ENCODE measurements at regions of chr12 and their contacts with region 1.

Region 1: DNA sequence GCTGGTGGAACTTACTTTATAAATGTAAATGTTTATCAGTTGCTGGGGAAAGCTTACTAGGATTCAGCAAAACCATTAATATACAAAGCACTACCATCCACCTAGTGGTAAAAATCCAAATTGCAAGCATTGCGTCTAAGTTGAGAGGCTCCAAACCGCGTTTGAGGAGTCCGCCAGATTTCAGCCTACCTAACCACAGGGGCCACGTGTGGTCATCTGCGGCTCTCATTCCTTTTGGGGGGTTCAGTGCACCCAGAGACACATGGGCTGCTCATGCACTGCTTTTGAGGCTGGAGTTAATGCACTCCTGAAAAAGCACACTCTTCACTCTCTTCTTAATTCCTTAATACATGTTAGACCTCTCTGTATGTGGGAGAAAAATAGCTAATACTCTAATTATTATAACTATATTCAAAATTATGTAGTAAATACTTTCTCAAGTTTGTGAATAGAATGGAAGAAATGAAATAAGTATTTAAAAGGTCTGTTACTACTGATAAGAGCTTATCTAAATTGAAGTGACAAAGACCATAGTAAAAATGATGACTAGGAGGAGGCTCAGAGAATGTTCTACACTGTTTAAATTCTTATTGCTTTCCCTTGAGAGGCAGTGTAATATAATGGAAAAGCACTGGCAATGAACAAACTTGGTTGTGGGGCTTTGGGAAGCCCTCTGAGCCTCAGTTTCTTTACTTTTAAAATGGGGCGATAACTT is 41.4 kb upstream of the MANSC4 start:
- DNase-seq: peak in 2 of 5 donors; percentile 21 to 28
- H3K4me3 ChIP-seq: no peak overlapping the region
- H3K27ac ChIP-seq: no peak overlapping the region
- H3K4me1 ChIP-seq: peaks cover 2% of the 10 kb centered on the region
- H3K27me3 ChIP-seq: no peaks in the 10 kb centered on the region
- CTCF ChIP-seq: peak; percentile 10 to 48 (median 45)
- EP300 ChIP-seq: no peak
- POLR2A ChIP-seq: no peak

Region 2: DNA sequence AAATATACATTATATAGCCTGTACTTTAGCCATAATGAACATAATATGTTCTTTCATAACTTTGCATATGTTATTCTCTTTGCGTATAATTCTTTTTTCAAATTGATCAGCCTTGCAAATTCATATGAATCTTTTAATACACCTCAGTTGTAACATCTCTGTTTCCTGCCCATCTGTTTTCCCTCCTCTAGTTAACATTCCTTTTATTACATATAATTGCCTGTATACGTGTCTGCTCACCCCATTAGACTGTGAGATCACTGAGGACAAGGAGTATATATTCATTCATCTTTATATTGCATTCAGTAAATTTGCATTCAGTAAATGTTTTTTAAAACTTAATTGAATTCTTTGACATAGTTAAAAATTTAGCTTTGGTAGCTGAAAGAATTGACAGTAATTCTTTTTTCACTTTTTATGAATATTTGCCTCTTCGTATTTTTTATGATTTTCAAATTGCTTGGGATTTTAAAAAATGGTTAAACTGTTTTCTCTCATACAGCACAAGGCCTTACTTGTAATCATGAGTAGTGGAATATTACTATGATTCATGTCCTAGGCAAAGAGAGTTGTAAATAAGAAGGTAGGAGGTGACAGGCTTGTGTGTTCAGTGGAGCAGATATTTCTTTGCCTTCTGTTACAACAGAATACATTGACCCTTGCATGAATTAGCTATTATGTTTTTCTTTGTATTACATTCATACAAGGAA is 74.2 kb before region 1 on chr12:
- intact Hi-C with region 1: loop called in 1 of 4 experiments (anchors 10 kb)
- DNase-seq: no peak
- H3K4me3 ChIP-seq: no peak overlapping the region
- H3K27ac ChIP-seq: no peak overlapping the region
- H3K4me1 ChIP-seq: no peaks in the 10 kb centered on the region
- H3K27me3 ChIP-seq: no peaks in the 10 kb centered on the region
- CTCF ChIP-seq: no peak
- EP300 ChIP-seq: no peak
- POLR2A ChIP-seq: no peak

Region 3: GRCh38 chr12:27785882-27786570 is 35.4 kb before region 1 on chr12:
- intact Hi-C with region 1: loop called in 1 of 4 experiments (anchors 1 kb)
- DNase-seq: no peak
- H3K4me3 ChIP-seq: no peak overlapping the region
- H3K27ac ChIP-seq: no peak overlapping the region
- H3K4me1 ChIP-seq: peaks cover 8% of the 10 kb centered on the region
- H3K27me3 ChIP-seq: no peaks in the 10 kb centered on the region
- CTCF ChIP-seq: no peak
- EP300 ChIP-seq: no peak
- POLR2A ChIP-seq: no peak

Region 4: DNA sequence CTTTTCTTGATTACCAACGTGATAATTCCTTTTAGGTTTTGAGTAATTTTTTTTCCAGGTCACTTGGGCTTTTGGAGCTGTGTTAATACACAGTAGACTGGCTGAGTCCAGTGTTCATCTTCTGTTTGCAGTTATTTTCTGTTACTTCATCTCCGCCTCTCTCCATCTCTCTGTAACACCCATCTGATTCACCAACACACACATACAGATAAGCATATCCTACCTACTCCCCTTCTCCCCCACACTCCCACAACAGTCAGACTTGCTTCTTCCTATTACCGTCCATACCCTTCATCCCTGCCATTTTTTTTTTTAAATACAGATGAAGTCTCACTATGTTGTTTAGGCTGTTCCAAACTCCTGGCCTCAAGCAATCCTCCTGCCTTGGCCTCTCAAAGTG is 31.3 kb after region 1 on chr12:
- intact Hi-C with region 1: no loop called
- DNase-seq: no peak
- H3K4me3 ChIP-seq: no peak overlapping the region
- H3K27ac ChIP-seq: no peak overlapping the region
- H3K4me1 ChIP-seq: no peaks in the 10 kb centered on the region
- H3K27me3 ChIP-seq: no peaks in the 10 kb centered on the region
- CTCF ChIP-seq: no peak
- EP300 ChIP-seq: no peak
- POLR2A ChIP-seq: no peak